ENCODE measurements at regions of chr15 and their contacts with region 1.

Region 1: DNA sequence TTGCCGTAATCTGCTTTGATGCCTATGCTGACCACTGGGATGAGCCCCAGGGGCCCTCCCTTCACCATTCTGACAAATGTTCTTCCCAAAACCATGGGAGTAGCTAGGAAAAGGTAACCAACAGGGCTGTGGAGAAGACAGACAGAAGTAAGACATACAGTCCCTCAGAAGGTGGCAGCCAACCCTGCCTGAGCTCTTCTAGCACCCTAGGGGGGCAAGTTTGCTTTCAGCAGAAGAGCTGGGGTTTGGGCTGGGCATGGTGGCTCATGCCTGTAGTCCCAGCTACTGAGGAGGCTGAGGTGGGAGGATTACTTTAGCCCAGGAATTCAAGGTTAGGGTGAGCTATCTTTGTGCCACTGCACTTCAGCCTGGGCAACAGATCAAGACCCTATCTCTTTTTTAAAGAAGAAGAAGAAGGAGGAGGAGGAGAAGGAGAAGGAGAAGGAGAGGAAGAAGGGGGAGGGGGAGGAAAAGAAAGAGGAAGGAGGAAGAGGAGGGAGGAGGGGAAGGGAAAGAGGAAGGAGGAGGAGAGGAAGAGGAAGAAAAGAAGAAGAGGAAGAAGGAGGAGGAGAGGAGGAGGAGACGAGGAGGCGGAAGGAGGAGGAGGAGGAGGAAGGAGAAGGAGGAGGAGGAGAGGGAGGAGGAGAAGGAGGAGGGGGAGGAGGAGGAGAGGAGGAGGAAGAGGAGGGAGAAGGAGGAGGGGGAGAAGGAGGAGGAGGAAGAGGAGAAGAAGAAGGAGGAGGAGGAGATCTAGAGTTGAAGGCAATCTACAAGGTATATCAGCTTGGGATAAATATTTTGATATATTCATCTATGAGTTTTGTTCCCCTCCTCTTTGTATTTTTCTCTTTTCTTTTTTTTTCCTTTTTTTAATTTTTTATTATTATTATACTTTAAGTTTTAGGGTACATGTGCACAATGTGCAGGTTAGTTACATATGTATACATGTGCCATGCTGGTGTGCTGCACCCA is 44.9 kb upstream of the ABHD2 start:
- DNase-seq: no peak
- H3K4me3 Mint-ChIP-seq: no peak overlapping the region
- H3K27ac Mint-ChIP-seq: no peak overlapping the region
- H3K4me1 Mint-ChIP-seq: peaks cover 8% of the 10 kb centered on the region
- H3K27me3 Mint-ChIP-seq: peaks cover 14% of the 10 kb centered on the region
- CTCF ChIP-seq: no peak

Region 2: DNA sequence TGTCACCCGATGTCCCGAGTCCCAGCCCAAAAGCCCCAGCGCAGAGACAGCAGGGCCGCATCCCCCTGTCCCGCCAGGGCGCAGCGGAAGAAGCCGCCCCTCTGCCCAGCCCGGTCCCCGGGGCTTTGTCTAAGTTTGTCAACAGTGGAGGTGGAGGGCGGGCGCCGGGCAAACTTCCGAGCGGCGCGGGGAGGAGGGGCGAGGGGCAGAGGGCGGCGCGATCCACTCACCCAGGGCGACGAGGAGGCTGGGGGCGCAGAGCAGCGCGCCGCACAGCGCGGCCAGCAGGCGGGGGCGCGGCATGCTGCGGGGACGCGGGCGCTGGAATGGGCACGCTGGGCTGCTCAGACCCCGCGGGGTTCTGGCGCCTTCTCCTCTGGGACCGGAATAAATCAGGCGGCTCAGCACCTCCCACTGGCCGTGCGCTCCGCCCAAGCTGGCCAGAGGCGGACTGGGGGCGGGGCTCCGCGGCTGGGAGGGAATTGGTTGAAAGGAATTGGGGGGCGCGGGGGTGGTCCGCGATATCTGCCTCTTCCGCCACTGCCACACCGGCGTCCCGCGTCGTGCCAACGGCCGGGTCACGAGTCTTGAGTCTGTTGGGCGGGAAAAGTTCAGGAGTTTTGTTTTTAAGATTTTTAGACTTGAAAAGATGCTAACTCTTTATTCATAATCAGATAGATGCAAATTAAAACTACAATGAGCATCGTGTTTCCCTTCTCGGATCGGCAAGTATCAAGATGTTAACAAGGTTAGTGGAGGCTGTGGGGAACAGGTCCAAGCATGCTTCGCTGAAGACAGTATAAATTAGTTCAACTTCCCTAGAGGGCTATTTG is 130.1 kb before region 1 on chr15 and contains the start of gene MFGE8:
- CTCF ChIA-PET with region 1: interaction called, 17 read pairs
- intact Hi-C with region 1: no loop called
- DNase-seq: peak; percentile 83
- H3K4me3 Mint-ChIP-seq: peak within 1 kb of the TSS; percentile 85
- H3K27ac Mint-ChIP-seq: peak within 1 kb of the TSS; percentile 28
- H3K4me1 Mint-ChIP-seq: peaks cover 9% of the 10 kb centered on the region
- H3K27me3 Mint-ChIP-seq: peaks cover 14% of the 10 kb centered on the region
- CTCF ChIP-seq: no peak
- total RNA-seq, gene MFGE8: 35.5 and 36.2 TPM in 2 replicates